Gastrocnemius medialis (tissue), 4 donors: ENCODE measurements at regions of chr17 and their contacts with region 1.

Region 1: GRCh38 chr17:29931231-29931932 is 1.4 kb upstream of the SSH2 start:
- DNase-seq: peak; percentile 27 to 53
- ATAC-seq: peak; percentile 55 to 56
- H3K4me3 ChIP-seq: peak overlapping the region; percentile 79 to 95 (median 90)
- H3K27ac ChIP-seq: peak overlapping the region; percentile 93 to 98 (median 94)
- H3K4me1 ChIP-seq: peaks cover 33 to 39% of the 10 kb centered on the region in 2 donors
- H3K27me3 ChIP-seq: no peaks in the 10 kb centered on the region
- CTCF ChIP-seq: peak; percentile 73 to 92 (median 89)
- POLR2A ChIP-seq: no peak

Region 2: GRCh38 chr17:29568331-29569244 is 362.8 kb before region 1 on chr17 and contains the start of gene TP53I13:
- in situ Hi-C with region 1: loop called in 1 of 4 experiments (anchors 25 kb)
- intact Hi-C with region 1: loop called (anchors 5 kb)
- DNase-seq: peak; percentile 62 to 76
- ATAC-seq: peak; percentile 61 to 69
- H3K4me3 ChIP-seq: peak within 1 kb of the TSS; percentile 66 to 82 (median 79)
- H3K27ac ChIP-seq: peak within 1 kb of the TSS; percentile 85 to 93 (median 86)
- H3K4me1 ChIP-seq: peaks cover 17 to 28% of the 10 kb centered on the region in 2 donors
- H3K27me3 ChIP-seq: peaks cover 0 to 5% (median 0%) of the 10 kb centered on the region in 3 donors
- CTCF ChIP-seq: no peak
- POLR2A ChIP-seq: peak; percentile 66 to 86
- total RNA-seq, gene TP53I13: 31.0 to 50.2 (median 32.1) TPM

Region 3: DNA sequence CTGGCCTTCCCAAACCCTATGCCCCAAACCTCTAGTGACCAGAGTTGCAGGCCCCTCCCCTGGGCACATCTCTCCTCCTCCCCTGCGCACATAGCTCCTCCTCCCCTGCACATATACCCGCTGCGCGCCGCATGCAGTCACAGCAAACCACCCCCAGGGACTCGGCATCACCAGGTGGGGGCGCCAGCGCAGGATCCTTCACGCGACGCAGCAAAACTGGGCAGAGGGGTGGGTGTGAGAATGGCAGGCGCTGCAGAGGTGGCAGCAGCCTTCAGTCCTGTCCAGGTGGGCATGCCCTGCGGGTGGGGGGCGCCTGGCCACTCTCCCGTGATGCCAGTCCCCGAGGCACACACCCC is 314.3 kb before region 1 on chr17:
- in situ Hi-C with region 1: loop called in 2 of 4 experiments (anchors 25 kb)
- intact Hi-C with region 1: loop called (anchors 1 kb)
- DNase-seq: peak in 1 of 2 donors; percentile 65
- ATAC-seq: no peak
- H3K4me3 ChIP-seq: peak overlapping the region; percentile 32 to 94 (median 67)
- H3K27ac ChIP-seq: peak overlapping the region; percentile 98 to 100 (median 99)
- H3K4me1 ChIP-seq: peaks cover 74 to 83% of the 10 kb centered on the region in 2 donors
- H3K27me3 ChIP-seq: no peaks in the 10 kb centered on the region
- CTCF ChIP-seq: peak; percentile 16 to 55 (median 50)
- POLR2A ChIP-seq: no peak

Region 4: GRCh38 chr17:29807520-29808351 is 123.6 kb before region 1 on chr17:
- in situ Hi-C with region 1: loop called (anchors 5 kb)
- intact Hi-C with region 1: loop called (anchors 1 kb)
- DNase-seq: peak; percentile 36 to 39
- ATAC-seq: peak; percentile 73 to 85
- H3K4me3 ChIP-seq: no peak overlapping the region
- H3K27ac ChIP-seq: no peak overlapping the region
- H3K4me1 ChIP-seq: no peaks in the 10 kb centered on the region
- H3K27me3 ChIP-seq: no peaks in the 10 kb centered on the region
- CTCF ChIP-seq: peak; percentile 58 to 74 (median 71)
- POLR2A ChIP-seq: no peak

Region 5: DNA sequence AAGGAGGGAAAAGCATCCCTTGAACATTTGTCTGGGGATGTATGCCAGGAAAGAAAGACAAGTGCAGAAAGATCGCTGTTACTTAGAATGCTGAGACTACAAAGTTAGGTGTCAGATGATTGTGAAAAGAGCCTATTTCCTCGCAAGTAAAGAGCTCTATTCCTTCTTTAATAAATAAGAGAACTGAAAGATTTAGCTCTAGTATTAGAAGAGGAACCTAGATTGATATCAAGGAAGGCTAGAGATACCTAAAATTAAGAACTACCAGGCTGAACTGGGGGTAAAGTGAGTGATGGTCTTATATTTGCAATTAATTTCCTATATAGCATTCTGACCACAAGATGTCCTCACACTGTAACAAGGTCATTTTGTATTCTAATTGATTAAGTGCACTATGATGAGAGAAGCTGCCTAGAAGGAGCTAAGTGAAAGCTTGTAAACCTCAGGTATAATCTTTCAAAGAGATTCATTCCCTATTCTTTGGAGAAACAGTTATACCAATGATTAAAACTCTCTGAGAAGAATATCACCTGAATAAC is 63.7 kb before region 1 on chr17:
- in situ Hi-C with region 1: no loop called
- intact Hi-C with region 1: loop called (anchors 5 kb)
- DNase-seq: no peak
- ATAC-seq: no peak
- H3K4me3 ChIP-seq: no peak overlapping the region
- H3K27ac ChIP-seq: no peak overlapping the region
- H3K4me1 ChIP-seq: peaks cover 8 to 26% of the 10 kb centered on the region in 2 donors
- H3K27me3 ChIP-seq: no peaks in the 10 kb centered on the region
- CTCF ChIP-seq: no peak
- POLR2A ChIP-seq: no peak

Region 6: GRCh38 chr17:29909236-29910003 is 22.0 kb before region 1 on chr17:
- in situ Hi-C with region 1: no loop called
- intact Hi-C with region 1: no loop called
- DNase-seq: no peak
- ATAC-seq: no peak
- H3K4me3 ChIP-seq: no peak overlapping the region
- H3K27ac ChIP-seq: no peak overlapping the region
- H3K4me1 ChIP-seq: peaks cover 14 to 20% of the 10 kb centered on the region in 2 donors
- H3K27me3 ChIP-seq: no peaks in the 10 kb centered on the region
- CTCF ChIP-seq: no peak
- POLR2A ChIP-seq: no peak

Region 7: DNA sequence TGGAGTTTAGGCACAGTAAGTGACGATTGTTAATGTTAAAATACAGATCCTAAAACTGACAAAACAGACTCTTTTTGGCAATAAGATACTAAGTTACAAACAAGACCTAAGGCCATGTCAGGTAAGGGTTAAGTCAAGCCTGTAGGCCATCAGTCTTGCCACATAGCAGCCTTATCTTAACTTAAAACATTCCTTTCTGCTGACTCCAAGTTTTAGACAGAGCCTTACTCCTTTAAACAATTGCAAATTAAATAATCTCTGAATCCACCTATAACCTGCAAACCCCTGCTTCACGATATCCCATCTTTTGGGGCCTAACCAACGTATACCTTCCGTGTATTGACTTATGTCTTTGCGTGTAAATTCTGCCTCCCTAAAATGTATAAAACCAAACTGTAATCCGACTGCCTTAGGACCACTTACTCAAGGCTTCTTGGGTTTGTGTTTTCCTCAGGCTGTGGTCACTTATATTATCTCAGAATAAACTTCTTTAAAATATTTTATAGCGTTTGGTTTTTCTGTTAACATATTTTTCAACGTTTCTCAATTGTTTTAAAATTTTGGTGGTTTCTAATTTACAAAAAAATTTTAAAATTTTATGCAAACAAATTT is 74.4 kb after region 1 on chr17:
- in situ Hi-C with region 1: no loop called
- intact Hi-C with region 1: no loop called
- DNase-seq: no peak
- ATAC-seq: no peak
- H3K4me3 ChIP-seq: no peak overlapping the region
- H3K27ac ChIP-seq: no peak overlapping the region
- H3K4me1 ChIP-seq: no peaks in the 10 kb centered on the region
- H3K27me3 ChIP-seq: no peaks in the 10 kb centered on the region
- CTCF ChIP-seq: no peak
- POLR2A ChIP-seq: no peak